ENCODE measurements at regions of chr7 and their contacts with region 1.

Region 1: GRCh38 chr7:54394834-54395233 is 147.3 kb upstream of the VSTM2A start:
- DNase-seq: peak; percentile 13
- H3K4me3 ChIP-seq: no peak overlapping the region
- H3K27ac ChIP-seq: no peak overlapping the region
- H3K4me1 ChIP-seq: peaks cover 6% of the 10 kb centered on the region
- H3K27me3 ChIP-seq: peaks cover 3% of the 10 kb centered on the region
- CTCF ChIP-seq: no peak

Region 2: GRCh38 chr7:53675835-53676234 is 719.0 kb before region 1 on chr7:
- CTCF ChIA-PET with region 1: interaction called, 15 read pairs
- dilution Hi-C with region 1: no loop called
- in situ Hi-C with region 1: no loop called
- intact Hi-C with region 1: no loop called
- DNase-seq: no peak
- H3K4me3 ChIP-seq: no peak overlapping the region
- H3K27ac ChIP-seq: no peak overlapping the region
- H3K4me1 ChIP-seq: no peaks in the 10 kb centered on the region
- H3K27me3 ChIP-seq: peaks cover 7% of the 10 kb centered on the region
- CTCF ChIP-seq: no peak

Region 3: GRCh38 chr7:54201501-54201900 is 193.3 kb before region 1 on chr7:
- CTCF ChIA-PET with region 1: no interaction called
- dilution Hi-C with region 1: no loop called
- in situ Hi-C with region 1: no loop called
- intact Hi-C with region 1: no loop called
- DNase-seq: no peak
- H3K4me3 ChIP-seq: no peak overlapping the region
- H3K27ac ChIP-seq: no peak overlapping the region
- H3K4me1 ChIP-seq: no peaks in the 10 kb centered on the region
- H3K27me3 ChIP-seq: no peaks in the 10 kb centered on the region
- CTCF ChIP-seq: no peak

Measured in mammary epithelial cell (primary cell).